ENCODE measurements at regions of chr7 and their contacts with region 1.

Region 1: GRCh38 chr7:102272075-102272917 is 14.4 kb upstream of the SH2B2 start:
- DNase-seq: peak; percentile 77 to 88 (median 82)
- H3K4me3 ChIP-seq: no peak overlapping the region
- H3K27ac ChIP-seq: no peak overlapping the region
- H3K4me1 ChIP-seq: peaks cover 2% of the 10 kb centered on the region
- H3K27me3 ChIP-seq: no peaks in the 10 kb centered on the region
- CTCF ChIP-seq: peak; percentile 81 to 88 (median 85)
- EP300 ChIP-seq: no peak
- POLR2A ChIP-seq: no peak

Region 2: DNA sequence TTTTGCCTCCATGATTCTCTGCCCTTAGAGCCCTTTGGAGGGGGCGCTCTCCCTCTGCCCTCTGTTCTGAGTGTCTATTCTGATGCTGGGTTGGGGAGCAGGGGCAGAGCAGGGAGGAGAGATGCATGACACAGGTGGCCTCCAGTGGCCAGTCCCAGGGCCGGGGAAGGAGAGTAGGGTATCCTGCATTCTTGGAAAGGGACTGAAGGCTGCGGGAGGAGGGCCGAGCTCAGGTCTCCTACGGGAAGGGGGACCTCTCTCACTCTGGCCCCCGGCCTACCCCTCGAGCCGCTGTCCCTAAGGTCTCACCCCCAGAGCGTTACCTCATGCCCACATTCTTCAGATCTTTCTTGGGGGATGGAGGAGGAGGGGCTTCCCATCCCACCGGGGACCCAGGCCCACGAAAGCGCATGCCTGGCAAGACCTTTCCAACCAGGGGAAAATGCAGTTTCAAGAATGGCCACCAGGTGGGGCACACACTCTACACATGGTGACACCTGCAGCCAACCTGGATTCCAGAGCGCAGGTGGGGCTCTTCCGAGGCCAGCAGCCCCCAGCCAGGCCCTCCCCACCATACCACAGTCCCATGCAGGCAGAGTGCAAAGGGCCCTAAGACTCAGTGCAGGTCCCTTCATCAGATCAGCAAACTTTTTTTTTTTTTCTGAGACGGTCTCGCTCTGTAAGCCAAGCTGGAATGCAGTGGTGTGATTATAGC is 729.6 kb before region 1 on chr7:
- intact Hi-C with region 1: loop called (anchors 2 to 5 kb)
- DNase-seq: peak; percentile 47 to 75 (median 71)
- H3K4me3 ChIP-seq: no peak overlapping the region
- H3K27ac ChIP-seq: no peak overlapping the region
- H3K4me1 ChIP-seq: no peaks in the 10 kb centered on the region
- H3K27me3 ChIP-seq: no peaks in the 10 kb centered on the region
- CTCF ChIP-seq: peak; percentile 71 to 86 (median 79)
- EP300 ChIP-seq: no peak
- POLR2A ChIP-seq: no peak

Region 3: DNA sequence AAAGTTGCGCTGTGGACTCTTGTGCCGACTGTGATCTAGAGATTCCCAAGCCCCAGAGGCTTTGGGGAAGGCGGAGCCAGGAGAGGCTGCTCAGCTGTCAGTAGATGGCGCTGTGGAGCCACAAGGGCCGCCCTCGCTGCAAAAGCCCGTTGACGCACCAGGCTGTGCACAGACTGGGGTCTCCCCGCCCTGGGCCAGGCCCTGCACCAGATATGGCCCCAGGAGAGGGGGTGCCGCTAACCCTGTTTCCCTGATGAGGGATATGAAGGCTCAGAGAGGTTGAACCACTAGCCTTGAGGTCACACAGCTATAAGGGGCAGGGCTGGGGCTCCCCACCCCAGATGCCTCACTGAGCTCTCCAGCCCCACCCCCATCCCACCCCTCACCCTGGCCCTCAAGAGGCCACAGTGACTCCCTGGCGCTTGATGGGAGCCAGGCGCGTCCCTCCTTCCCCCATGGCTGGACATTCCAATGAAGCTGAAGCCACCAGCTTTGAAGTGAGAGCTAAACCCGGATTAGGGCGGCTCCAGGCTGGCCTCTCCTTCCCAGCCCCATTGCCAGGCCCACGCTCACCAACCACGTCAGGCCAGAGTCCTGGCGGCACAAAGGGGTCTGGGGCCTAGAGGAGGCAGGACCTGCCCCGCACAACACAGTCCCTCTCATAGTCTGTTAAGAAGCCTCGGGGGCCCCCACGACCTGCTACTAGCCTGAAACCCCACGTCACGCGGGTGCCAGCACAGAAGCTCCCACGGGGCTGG is 669.6 kb before region 1 on chr7:
- intact Hi-C with region 1: loop called in 2 of 4 experiments (anchors 5 to 10 kb)
- DNase-seq: peak; percentile 57 to 83 (median 72)
- H3K4me3 ChIP-seq: no peak overlapping the region
- H3K27ac ChIP-seq: no peak overlapping the region
- H3K4me1 ChIP-seq: no peaks in the 10 kb centered on the region
- H3K27me3 ChIP-seq: no peaks in the 10 kb centered on the region
- CTCF ChIP-seq: peak; percentile 48 to 56 (median 53)
- EP300 ChIP-seq: no peak
- POLR2A ChIP-seq: no peak

Region 4: GRCh38 chr7:101688183-101688831 is 584.0 kb before region 1 on chr7:
- intact Hi-C with region 1: loop called in 2 of 4 experiments (anchors 2 to 10 kb)
- DNase-seq: peak; percentile 72 to 91 (median 86)
- H3K4me3 ChIP-seq: peak overlapping the region; percentile 24
- H3K27ac ChIP-seq: no peak overlapping the region
- H3K4me1 ChIP-seq: peaks cover 6% of the 10 kb centered on the region
- H3K27me3 ChIP-seq: no peaks in the 10 kb centered on the region
- CTCF ChIP-seq: peak; percentile 94 to 96 (median 95)
- EP300 ChIP-seq: no peak
- POLR2A ChIP-seq: no peak

Region 5: GRCh38 chr7:102040569-102040968 is 231.7 kb before region 1 on chr7:
- intact Hi-C with region 1: no loop called
- DNase-seq: no peak
- H3K4me3 ChIP-seq: no peak overlapping the region
- H3K27ac ChIP-seq: no peak overlapping the region
- H3K4me1 ChIP-seq: peaks cover 5% of the 10 kb centered on the region
- H3K27me3 ChIP-seq: no peaks in the 10 kb centered on the region
- CTCF ChIP-seq: no peak
- EP300 ChIP-seq: no peak
- POLR2A ChIP-seq: no peak

Measured in ovary (tissue), 10 donors.